ENCODE measurements at regions of chr12 and their contacts with region 1.

Region 1: GRCh38 chr12:120741476-120742421 is 16.1 kb downstream of the ACADS start:
- DNase-seq: peak; percentile 76

Region 2: GRCh38 chr12:120904197-120904773 is 162.5 kb after region 1 on chr12 and contains the start of gene SPPL3:
- intact Hi-C with region 1: no loop called
- DNase-seq: peak; percentile 97
- total RNA-seq, gene SPPL3: 31.6 TPM

Region 3: DNA sequence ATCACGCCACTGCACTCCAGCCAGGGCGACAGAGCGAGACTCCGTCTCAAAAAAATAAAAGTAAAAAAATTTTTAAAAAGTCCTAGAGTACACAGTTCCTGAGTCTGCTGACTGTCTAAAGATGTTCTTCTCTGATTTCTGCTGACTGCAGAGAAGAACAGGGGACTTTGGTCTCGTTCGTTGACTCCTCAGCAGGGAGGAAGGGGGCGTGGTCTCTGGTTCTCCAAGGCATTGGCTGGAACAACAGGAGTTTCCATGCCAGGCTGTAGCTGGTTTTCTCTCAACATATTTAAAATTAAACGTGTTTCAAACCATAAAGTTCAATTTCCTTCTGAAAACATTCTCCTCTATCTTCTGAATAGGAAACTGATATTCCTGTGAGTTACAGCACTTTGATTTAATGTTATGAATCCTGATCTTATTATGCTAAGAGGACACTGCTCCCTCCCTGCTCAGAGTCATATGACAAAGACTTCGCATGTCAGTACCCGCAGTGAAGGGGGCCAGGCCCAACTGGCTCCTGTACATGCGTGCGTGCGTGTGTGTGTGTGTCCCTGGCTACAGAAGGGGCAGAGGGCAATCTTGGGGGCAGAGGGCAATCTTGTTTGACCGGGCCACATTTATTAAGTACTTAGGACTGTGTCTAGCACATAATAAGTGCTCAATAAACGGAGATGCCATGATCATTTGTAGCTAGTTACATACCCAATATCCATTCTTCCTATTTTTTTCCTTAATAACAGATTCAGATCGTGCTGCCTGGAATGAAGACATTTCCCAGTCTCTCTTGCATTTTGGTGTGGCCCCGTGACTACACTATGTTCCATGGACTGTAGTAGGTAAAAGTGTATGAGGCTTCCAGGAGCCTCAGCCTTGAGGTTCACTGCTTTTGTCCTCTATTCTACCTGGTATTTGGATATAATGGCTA is 220.1 kb after region 1 on chr12:
- intact Hi-C with region 1: loop called in 1 of 2 experiments (anchors 10 kb)
- DNase-seq: no peak